ENCODE measurements at regions of chr7 and their contacts with region 1.

Region 1: DNA sequence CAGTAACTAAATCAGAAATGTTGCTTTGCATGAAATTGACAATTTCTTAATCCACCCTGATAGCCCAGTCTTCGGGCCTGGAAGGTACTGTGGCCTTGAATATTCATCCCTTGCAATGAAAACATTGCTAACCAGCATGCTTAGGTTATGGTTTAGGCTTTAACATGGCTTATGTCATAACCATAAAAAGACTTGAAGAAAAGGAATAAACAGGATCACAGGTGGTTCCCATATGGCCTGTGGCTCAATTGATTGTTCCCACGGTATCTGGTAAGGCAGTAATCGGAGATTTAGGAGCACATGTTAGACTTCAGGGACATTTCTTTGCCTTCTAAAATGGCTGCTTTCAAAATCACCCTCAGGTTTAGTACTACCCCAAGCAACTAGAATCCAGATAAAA is 139.5 kb downstream of the ST7 start:
- DNase-seq: no peak
- H3K4me3 ChIP-seq: no peak overlapping the region
- H3K4me3 Mint-ChIP-seq: no peak overlapping the region
- H3K27ac ChIP-seq: no peak overlapping the region
- H3K27ac Mint-ChIP-seq: no peak overlapping the region
- H3K4me1 ChIP-seq: peaks cover 3% of the 10 kb centered on the region
- H3K4me1 Mint-ChIP-seq: peaks cover 4 to 6% (median 4%) of the 10 kb centered on the region in 3 donors
- H3K27me3 ChIP-seq: no peaks in the 10 kb centered on the region
- H3K27me3 Mint-ChIP-seq: no peaks in the 10 kb centered on the region

Region 2: DNA sequence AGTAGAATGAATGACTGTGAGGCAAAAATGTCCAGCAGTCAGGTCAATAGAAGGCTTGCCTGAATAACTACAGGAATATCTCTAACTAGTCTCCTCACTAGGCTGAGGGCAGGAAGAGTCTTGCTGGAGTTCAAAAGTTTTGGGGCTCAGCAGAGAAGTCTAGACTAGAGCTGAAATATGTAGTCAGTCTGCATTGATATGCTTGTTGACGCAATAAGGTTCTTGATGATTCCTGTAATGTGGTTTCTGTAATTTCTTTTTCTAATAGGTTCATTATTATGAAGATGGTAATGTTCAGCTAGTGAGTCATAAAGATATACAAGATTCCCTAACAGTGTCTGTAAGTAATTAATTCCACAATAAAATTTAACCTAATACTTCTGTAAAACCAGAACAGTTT is 181.0 kb before region 1 on chr7:
- CTCF ChIA-PET with region 1: no interaction called
- POLR2A ChIA-PET with region 1: no interaction called
- DNase-seq: no peak
- H3K4me3 ChIP-seq: no peak overlapping the region
- H3K4me3 Mint-ChIP-seq: no peak overlapping the region
- H3K27ac ChIP-seq: no peak overlapping the region
- H3K27ac Mint-ChIP-seq: peak overlapping the region in 3 of 8 donors; percentile 4 to 20 (median 10)
- H3K4me1 ChIP-seq: no peaks in the 10 kb centered on the region
- H3K4me1 Mint-ChIP-seq: peaks cover 0 to 6% (median 0%) of the 10 kb centered on the region in 3 donors
- H3K27me3 ChIP-seq: no peaks in the 10 kb centered on the region
- H3K27me3 Mint-ChIP-seq: no peaks in the 10 kb centered on the region

Region 3: GRCh38 chr7:117061751-117062150 is 31.0 kb before region 1 on chr7:
- CTCF ChIA-PET with region 1: no interaction called
- POLR2A ChIA-PET with region 1: interaction called, 10 read pairs
- DNase-seq: no peak
- H3K4me3 ChIP-seq: no peak overlapping the region
- H3K4me3 Mint-ChIP-seq: no peak overlapping the region
- H3K27ac ChIP-seq: no peak overlapping the region
- H3K27ac Mint-ChIP-seq: no peak overlapping the region
- H3K4me1 ChIP-seq: no peaks in the 10 kb centered on the region
- H3K4me1 Mint-ChIP-seq: peaks cover 0 to under 1% (median 0%) of the 10 kb centered on the region in 3 donors
- H3K27me3 ChIP-seq: no peaks in the 10 kb centered on the region
- H3K27me3 Mint-ChIP-seq: peaks cover 0 to 4% of the 10 kb centered on the region in 2 donors

Region 4: DNA sequence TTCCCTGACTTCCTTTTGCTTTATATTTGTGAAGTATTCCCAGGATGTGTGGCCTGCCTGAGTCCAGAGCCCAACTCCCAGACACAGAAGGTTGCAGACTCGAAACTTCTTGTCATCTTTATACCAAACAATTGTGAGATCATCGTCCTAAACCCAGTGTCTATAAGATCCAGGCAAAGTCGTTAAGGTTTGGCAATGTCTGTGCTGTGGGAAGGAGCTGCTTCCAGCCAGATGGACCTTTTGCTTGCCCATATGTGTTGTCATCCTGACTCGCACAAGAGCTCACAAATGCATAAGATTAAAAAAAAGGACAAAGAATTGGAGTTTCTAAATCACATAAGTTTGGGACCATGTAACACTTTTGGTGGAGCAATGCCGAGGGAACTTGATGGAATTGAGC is 193.0 kb after region 1 on chr7:
- CTCF ChIA-PET with region 1: no interaction called
- POLR2A ChIA-PET with region 1: no interaction called
- DNase-seq: no peak
- H3K4me3 ChIP-seq: no peak overlapping the region
- H3K4me3 Mint-ChIP-seq: no peak overlapping the region
- H3K27ac ChIP-seq: no peak overlapping the region
- H3K27ac Mint-ChIP-seq: no peak overlapping the region
- H3K4me1 ChIP-seq: no peaks in the 10 kb centered on the region
- H3K4me1 Mint-ChIP-seq: no peaks in the 10 kb centered on the region
- H3K27me3 ChIP-seq: no peaks in the 10 kb centered on the region
- H3K27me3 Mint-ChIP-seq: peaks cover 0 to 1% of the 10 kb centered on the region in 2 donors